A549 (cell line): ENCODE measurements at regions of chr1 and their contacts with region 1.

Region 1: DNA sequence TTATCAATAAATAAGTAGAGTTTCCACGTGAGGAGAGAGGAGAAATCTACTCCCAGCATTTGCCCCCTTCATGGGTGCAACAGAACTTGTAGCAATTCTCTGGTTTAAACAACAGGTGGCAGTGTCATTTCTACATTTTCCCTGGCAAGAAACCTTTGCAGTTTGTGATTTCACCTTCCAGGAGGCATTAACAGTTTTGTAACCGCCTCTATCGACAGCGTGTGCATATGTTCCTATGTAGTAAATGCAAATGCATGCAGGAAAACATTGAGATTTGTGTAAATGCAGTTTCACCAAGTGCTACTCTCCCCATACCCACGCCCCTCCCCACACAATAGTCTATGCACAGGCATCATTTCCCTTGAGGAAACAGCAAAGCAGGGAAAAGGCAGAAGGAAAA is 494.7 kb downstream of the SMYD3 start:
- DNase-seq: peak; percentile 17 to 42
- ATAC-seq: peak in 1 of 2 experiments; percentile 67; a peak in 3 of 6 replicates
- H3K4me3 ChIP-seq: no peak overlapping the region
- H3K27ac ChIP-seq: no peak overlapping the region
- H3K4me1 ChIP-seq: no peaks in the 10 kb centered on the region
- CTCF ChIP-seq: peak; percentile 61
- EP300 ChIP-seq: no peak
- POLR2A ChIP-seq: no peak
- RAD21 ChIP-seq: peak; percentile 60 to 62

Region 2: DNA sequence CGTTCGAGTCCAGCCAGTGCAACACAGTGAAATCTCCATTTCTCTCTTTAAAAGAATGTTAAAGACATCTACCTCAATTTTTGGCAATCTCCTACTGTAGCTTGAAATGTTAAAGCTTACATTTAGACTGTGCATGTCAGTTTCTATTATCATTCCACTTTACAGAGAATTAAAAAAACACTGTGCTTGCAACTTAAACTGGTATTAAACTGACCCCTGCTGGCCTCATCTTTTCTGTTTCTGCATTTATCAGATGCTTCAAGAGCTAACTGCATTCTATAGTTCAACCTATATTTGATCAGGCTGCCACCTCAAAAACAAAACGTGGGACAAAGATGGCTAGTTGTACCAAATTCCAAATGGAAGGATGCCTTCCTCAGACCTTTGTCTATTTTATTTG is 268.2 kb after region 1 on chr1:
- CTCF ChIA-PET with region 1: interaction called, 12 read pairs
- POLR2A ChIA-PET with region 1: no interaction called
- DNase-seq: peak in 1 of 2 experiments; percentile 40
- ATAC-seq: peak; percentile 62 to 74; a peak in 4 of 6 replicates
- H3K4me3 ChIP-seq: no peak overlapping the region
- H3K27ac ChIP-seq: no peak overlapping the region
- H3K4me1 ChIP-seq: peaks cover 28% of the 10 kb centered on the region; the same call in 2 of the 3 replicates
- CTCF ChIP-seq: peak; percentile 55
- EP300 ChIP-seq: no peak
- POLR2A ChIP-seq: no peak
- RAD21 ChIP-seq: peak; percentile 65 to 68